PC-3 (cell line): ENCODE measurements at regions of chr3 and their contacts with region 1.

Region 1: GRCh38 chr3:115217678-115218451 is 70.8 kb upstream of the ZBTB20 start:
- DNase-seq: peak; percentile 72
- ATAC-seq: peak; percentile 86
- H3K4me3 ChIP-seq: no peak overlapping the region; the same call in 1 of the 2 replicates
- H3K27ac ChIP-seq: peak overlapping the region; percentile 17
- H3K4me1 ChIP-seq: peaks cover 10% of the 10 kb centered on the region; the same call in 1 of the 2 replicates
- H3K27me3 ChIP-seq: no peaks in the 10 kb centered on the region
- CTCF ChIP-seq: peak; percentile 95

Region 2: GRCh38 chr3:115160295-115160694 is 57.6 kb before region 1 on chr3:
- CTCF ChIA-PET with region 1: no interaction called
- POLR2A ChIA-PET with region 1: no interaction called
- intact Hi-C with region 1: no loop called
- DNase-seq: no peak
- ATAC-seq: no peak
- H3K4me3 ChIP-seq: no peak overlapping the region
- H3K27ac ChIP-seq: no peak overlapping the region
- H3K4me1 ChIP-seq: no peaks in the 10 kb centered on the region
- H3K27me3 ChIP-seq: 0 out of 2 replicates have a peak, but pooled peaks cover 5% of the 10 kb centered on the region
- CTCF ChIP-seq: no peak

Region 3: GRCh38 chr3:115436767-115437301 is 219.0 kb after region 1 on chr3:
- CTCF ChIA-PET with region 1: interaction called, 3 read pairs
- POLR2A ChIA-PET with region 1: no interaction called
- intact Hi-C with region 1: loop called (anchors 1 kb)
- DNase-seq: peak; percentile 80
- ATAC-seq: peak; percentile 80
- H3K4me3 ChIP-seq: no peak overlapping the region
- H3K27ac ChIP-seq: peak overlapping the region; percentile 39; the same call in 1 of the 2 replicates
- H3K4me1 ChIP-seq: peaks cover 5% of the 10 kb centered on the region
- H3K27me3 ChIP-seq: no peaks in the 10 kb centered on the region
- CTCF ChIP-seq: peak; percentile 55

Region 4: DNA sequence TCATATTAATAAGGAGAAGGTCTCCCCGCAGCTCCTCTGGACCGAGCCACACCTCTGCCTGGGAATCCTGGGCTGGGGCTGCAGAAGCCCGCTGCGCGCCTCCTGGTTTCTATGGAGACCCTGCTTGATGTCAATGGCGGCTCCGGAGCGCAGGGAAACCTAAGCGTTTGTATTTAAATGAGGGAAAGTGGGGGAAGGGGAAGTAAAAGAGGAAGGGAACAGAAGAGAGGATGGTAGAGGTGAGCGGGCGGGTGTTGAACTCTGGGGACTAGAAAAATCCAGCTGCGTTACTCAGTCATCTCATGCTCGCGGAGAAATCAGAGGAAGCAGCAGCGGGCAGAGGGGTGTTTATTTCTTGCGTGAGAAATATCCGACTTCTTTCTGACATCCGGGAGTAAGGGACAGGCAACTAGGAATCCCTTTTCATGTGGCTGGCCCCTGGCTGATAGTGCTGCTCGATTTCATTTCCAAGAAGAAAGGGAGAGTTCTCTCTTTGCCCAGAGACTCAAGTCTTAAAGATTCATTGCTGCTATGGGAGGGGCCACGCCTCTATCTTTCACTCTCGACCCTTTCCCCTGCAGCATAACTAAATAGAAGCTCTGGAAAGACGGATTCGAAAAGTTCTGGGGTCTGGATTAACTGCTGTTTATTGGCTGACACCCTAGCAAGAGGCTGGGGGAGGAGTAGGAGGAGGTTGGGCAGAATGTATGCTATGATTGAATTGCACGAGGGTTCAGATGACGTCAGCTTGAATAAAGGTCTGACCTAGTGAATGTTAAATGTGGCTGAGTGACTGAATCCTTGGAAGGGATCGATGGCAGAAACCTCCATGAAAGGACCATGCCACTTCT is 294.9 kb after region 1 on chr3:
- CTCF ChIA-PET with region 1: no interaction called
- POLR2A ChIA-PET with region 1: no interaction called
- intact Hi-C with region 1: loop called (anchors 10 kb)
- DNase-seq: no peak
- ATAC-seq: peak; percentile 64
- H3K4me3 ChIP-seq: peak overlapping the region; percentile 41
- H3K27ac ChIP-seq: no peak overlapping the region
- H3K4me1 ChIP-seq: no peaks in the 10 kb centered on the region
- H3K27me3 ChIP-seq: no peaks in the 10 kb centered on the region
- CTCF ChIP-seq: no peak

Region 5: GRCh38 chr3:115581362-115582135 is 363.7 kb after region 1 on chr3:
- CTCF ChIA-PET with region 1: no interaction called
- POLR2A ChIA-PET with region 1: interaction called, 13 read pairs
- intact Hi-C with region 1: no loop called
- DNase-seq: peak; percentile 52
- ATAC-seq: peak; percentile 86
- H3K4me3 ChIP-seq: no peak overlapping the region
- H3K27ac ChIP-seq: no peak overlapping the region
- H3K4me1 ChIP-seq: no peaks in the 10 kb centered on the region
- H3K27me3 ChIP-seq: peaks cover 19% of the 10 kb centered on the region
- CTCF ChIP-seq: no peak

Region 6: DNA sequence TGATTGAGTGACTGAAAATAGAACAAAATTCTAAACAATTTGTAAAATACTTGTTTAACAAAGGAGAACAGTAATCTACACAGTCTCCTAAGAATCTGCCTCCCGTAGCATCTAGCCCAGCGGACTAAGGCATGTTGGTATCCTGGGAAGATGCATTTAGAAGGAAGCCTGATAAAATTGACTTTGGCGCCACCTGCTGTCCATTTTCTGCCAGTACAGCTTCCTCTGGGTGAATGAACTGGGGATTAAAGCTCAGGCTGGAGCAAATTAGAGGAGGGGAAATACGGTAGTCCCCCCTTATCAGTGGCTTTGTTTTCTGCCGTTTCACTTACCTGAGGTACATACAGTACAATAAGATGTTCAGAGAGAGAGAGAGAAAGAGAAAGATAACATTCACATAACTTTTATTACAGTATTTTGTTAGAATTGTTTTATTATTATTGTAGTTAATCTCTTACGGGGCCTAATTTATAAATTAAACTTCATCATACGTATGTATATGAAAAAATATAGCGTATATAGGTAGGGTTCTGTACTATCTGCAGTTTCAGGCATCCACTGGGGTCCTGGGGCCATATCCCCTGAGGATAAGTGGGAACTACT is 597.0 kb after region 1 on chr3:
- CTCF ChIA-PET with region 1: interaction called, 5 read pairs
- POLR2A ChIA-PET with region 1: no interaction called
- intact Hi-C with region 1: loop called (anchors 1 kb)
- DNase-seq: peak; percentile 94
- ATAC-seq: peak; percentile 89
- H3K4me3 ChIP-seq: no peak overlapping the region
- H3K27ac ChIP-seq: no peak overlapping the region
- H3K4me1 ChIP-seq: peaks cover 8% of the 10 kb centered on the region; the same call in 1 of the 2 replicates
- H3K27me3 ChIP-seq: no peaks in the 10 kb centered on the region
- CTCF ChIP-seq: peak; percentile 97